Body of pancreas (tissue), 4 donors: ENCODE measurements at regions of chr4 and their contacts with region 1.

Region 1: DNA sequence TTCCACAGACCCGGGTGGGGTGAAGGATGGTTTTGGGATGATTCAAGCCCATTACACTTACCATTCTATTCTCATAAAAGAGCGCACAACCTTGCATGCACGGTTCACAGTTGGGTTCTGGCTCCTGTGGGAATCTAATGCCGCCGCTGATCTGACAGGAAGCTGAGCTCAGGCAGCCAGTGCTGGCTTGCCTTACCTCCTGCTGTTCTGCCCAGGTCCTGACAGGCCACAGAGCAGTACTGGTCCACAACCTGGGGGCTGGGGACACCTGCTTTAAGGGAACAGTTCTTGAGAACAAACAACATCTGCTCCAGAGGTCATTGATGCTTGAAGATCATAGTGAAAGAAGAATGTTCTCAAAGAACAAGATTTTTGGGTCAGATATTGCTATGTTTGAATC is 8.0 kb upstream of the HS3ST1 start:
- DNase-seq: no peak
- ATAC-seq: no peak
- H3K4me3 ChIP-seq: no peak overlapping the region
- H3K27ac ChIP-seq: no peak overlapping the region
- H3K4me1 ChIP-seq: no peaks in the 10 kb centered on the region
- H3K27me3 ChIP-seq: no peaks in the 10 kb centered on the region
- CTCF ChIP-seq: no peak
- POLR2A ChIP-seq: no peak

Region 2: GRCh38 chr4:10577018-10577417 is 859.7 kb before region 1 on chr4:
- intact Hi-C with region 1: loop called (anchors 10 kb)
- DNase-seq: no peak
- ATAC-seq: no peak
- H3K4me3 ChIP-seq: no peak overlapping the region
- H3K27ac ChIP-seq: no peak overlapping the region
- H3K4me1 ChIP-seq: no peaks in the 10 kb centered on the region
- H3K27me3 ChIP-seq: no peaks in the 10 kb centered on the region
- CTCF ChIP-seq: no peak
- POLR2A ChIP-seq: no peak